Heart left ventricle (tissue), 16 donors: ENCODE measurements at regions of chr11 and their contacts with region 1.

Region 1: DNA sequence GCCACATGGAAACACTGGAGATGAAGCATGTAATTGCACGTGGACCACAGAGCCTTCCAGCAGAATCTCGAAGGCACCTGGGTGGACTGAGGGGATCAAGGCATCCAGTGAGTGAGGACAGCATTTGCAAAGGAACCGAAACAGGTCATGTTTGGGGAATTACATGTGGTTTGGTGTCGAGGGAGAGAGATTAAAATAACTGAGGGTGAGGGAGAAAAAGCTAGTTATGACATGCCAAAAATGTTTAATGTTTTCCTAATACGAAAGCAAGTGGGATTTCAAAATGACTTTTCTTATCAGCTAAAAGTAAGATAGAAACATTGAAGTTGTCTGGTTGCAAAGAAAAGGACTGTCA is 157.1 kb downstream of the BLID start:
- DNase-seq: no peak
- ATAC-seq: no peak
- H3K4me3 ChIP-seq: no peak overlapping the region
- H3K27ac ChIP-seq: no peak overlapping the region
- H3K4me1 ChIP-seq: peaks cover 0 to 15% (median 0%) of the 10 kb centered on the region in 12 donors
- H3K27me3 ChIP-seq: no peaks in the 10 kb centered on the region
- CTCF ChIP-seq: no peak
- POLR2A ChIP-seq: no peak

Region 2: DNA sequence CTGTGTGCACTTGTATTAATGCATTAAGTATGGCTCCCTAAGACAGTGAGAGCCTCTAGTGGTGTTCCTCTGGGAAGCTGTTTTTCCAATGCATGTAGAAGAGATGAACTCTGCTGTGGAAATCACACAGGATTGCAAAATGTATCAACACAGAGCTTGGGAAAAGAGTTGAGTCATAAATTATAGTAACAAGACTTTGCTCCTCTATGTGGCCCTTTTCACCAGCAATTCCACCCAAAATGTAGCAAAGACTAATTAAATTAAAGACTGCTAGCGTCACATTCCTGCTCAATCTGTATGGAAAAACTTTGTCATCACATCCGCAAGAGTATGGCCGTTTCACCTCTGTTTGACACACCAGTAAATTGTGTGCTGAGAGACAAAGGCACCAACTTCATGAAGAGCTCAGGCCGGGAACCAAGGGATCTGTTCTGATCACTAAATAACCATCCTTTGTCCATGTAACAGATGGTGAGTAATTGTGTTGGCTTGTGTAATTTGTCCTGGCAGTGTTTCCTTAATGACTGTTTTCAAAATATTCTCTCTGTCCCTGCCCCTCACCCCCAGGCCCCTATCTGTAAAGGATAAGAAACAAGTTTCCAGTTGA is 297.0 kb before region 1 on chr11:
- intact Hi-C with region 1: loop called in 1 of 10 experiments (anchors 10 kb)
- DNase-seq: no peak
- ATAC-seq: peak in 3 of 4 donors; percentile 20 to 77 (median 72)
- H3K4me3 ChIP-seq: no peak overlapping the region
- H3K27ac ChIP-seq: peak overlapping the region in 5 of 12 donors; percentile 4 to 28 (median 19)
- H3K4me1 ChIP-seq: peaks cover 0 to 4% (median 0%) of the 10 kb centered on the region in 12 donors
- H3K27me3 ChIP-seq: no peaks in the 10 kb centered on the region
- CTCF ChIP-seq: no peak
- POLR2A ChIP-seq: no peak